Activated B cell treated with CpG ODN at 0.5 μM for 24 hours (primary cell): ENCODE measurements at regions of chr2 and their contacts with region 1.

Region 1: GRCh38 chr2:99442837-99443236 is 47.0 kb downstream of the REV1 start:
- DNase-seq: no peak
- ATAC-seq: no peak
- H3K4me3 Mint-ChIP-seq: no peak overlapping the region
- H3K27ac Mint-ChIP-seq: no peak overlapping the region
- H3K4me1 Mint-ChIP-seq: no peaks in the 10 kb centered on the region
- H3K27me3 Mint-ChIP-seq: no peaks in the 10 kb centered on the region
- CTCF ChIP-seq: no peak

Region 2: GRCh38 chr2:99422599-99422998 is 20.2 kb before region 1 on chr2:
- CTCF ChIA-PET with region 1: no interaction called
- POLR2A ChIA-PET with region 1: no interaction called
- intact Hi-C with region 1: loop called (anchors 2 kb)
- DNase-seq: no peak
- ATAC-seq: no peak
- H3K4me3 Mint-ChIP-seq: no peak overlapping the region
- H3K27ac Mint-ChIP-seq: no peak overlapping the region
- H3K4me1 Mint-ChIP-seq: no peaks in the 10 kb centered on the region
- H3K27me3 Mint-ChIP-seq: no peaks in the 10 kb centered on the region
- CTCF ChIP-seq: no peak

Region 3: DNA sequence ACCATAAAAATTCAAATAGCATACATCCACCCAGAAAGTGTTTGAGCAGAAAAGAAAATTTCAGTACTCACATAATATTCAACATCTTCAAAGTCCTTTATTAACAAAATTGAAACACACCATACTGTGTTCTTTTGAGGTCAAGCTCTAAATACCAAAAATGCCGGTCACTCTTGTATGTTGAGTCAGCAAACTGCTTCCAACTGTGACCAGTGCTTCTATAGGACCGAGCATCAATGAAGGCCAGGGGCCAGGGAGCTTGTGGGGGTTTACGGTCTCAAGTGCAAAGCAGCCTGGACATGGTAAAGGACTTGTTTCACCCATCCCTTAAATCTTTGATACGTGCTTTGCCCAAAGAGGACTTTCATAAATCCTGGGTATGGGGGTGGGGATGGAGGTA is 159.6 kb after region 1 on chr2:
- CTCF ChIA-PET with region 1: no interaction called
- POLR2A ChIA-PET with region 1: no interaction called
- intact Hi-C with region 1: no loop called
- DNase-seq: no peak
- ATAC-seq: no peak
- H3K4me3 Mint-ChIP-seq: no peak overlapping the region
- H3K27ac Mint-ChIP-seq: peak overlapping the region; percentile 35
- H3K4me1 Mint-ChIP-seq: peaks cover 8% of the 10 kb centered on the region
- H3K27me3 Mint-ChIP-seq: no peaks in the 10 kb centered on the region
- CTCF ChIP-seq: no peak

Region 4: GRCh38 chr2:99682275-99683060 is 239.6 kb after region 1 on chr2:
- CTCF ChIA-PET with region 1: no interaction called
- POLR2A ChIA-PET with region 1: no interaction called
- intact Hi-C with region 1: no loop called
- DNase-seq: no peak
- ATAC-seq: no peak
- H3K4me3 Mint-ChIP-seq: no peak overlapping the region
- H3K27ac Mint-ChIP-seq: no peak overlapping the region
- H3K4me1 Mint-ChIP-seq: no peaks in the 10 kb centered on the region
- H3K27me3 Mint-ChIP-seq: no peaks in the 10 kb centered on the region
- CTCF ChIP-seq: no peak